Prostate gland (tissue), 2 donors: ENCODE measurements at regions of chr5 and their contacts with region 1.

Region 1: GRCh38 chr5:180090098-180090768 is 18.7 kb upstream of the RNF130 start:
- DNase-seq: peak; percentile 18
- H3K4me3 ChIP-seq: peak overlapping the region; percentile 29 to 41
- H3K27ac ChIP-seq: peak overlapping the region; percentile 56 to 59
- H3K4me1 ChIP-seq: peaks cover 2% of the 10 kb centered on the region
- H3K27me3 ChIP-seq: no peaks in the 10 kb centered on the region
- CTCF ChIP-seq: peak; percentile 67 to 77 (median 76)
- POLR2A ChIP-seq: no peak

Region 2: GRCh38 chr5:179187229-179187678 is 903.0 kb before region 1 on chr5:
- intact Hi-C with region 1: no loop called
- DNase-seq: no peak
- H3K4me3 ChIP-seq: no peak overlapping the region
- H3K27ac ChIP-seq: no peak overlapping the region
- H3K4me1 ChIP-seq: no peaks in the 10 kb centered on the region
- H3K27me3 ChIP-seq: no peaks in the 10 kb centered on the region
- CTCF ChIP-seq: no peak
- POLR2A ChIP-seq: no peak

Region 3: GRCh38 chr5:179986328-179986727 is 103.9 kb before region 1 on chr5:
- intact Hi-C with region 1: loop called (anchors 5 kb)
- DNase-seq: no peak
- H3K4me3 ChIP-seq: no peak overlapping the region
- H3K27ac ChIP-seq: no peak overlapping the region
- H3K4me1 ChIP-seq: no peaks in the 10 kb centered on the region
- H3K27me3 ChIP-seq: no peaks in the 10 kb centered on the region
- CTCF ChIP-seq: peak in 3 of 4 experiments; percentile 12 to 39 (median 24)
- POLR2A ChIP-seq: no peak

Region 4: DNA sequence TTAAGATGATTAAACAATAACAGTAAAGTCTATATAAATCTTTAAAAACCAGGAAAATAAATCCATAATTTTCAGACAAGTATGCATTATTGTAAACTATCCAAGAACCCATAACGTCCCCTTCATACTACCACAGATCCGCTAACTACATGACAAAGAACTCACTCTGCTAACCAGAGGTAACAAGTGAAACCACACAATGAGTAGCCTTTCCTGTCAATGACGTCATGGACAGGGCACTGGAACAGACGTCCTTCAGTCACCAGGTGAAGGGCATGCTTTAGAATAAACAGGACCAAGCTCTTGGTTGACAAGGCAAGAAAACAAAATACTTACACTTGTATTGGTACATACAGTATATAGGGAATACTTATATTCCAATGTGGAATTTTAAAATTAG is 63.9 kb before region 1 on chr5:
- intact Hi-C with region 1: no loop called
- DNase-seq: no peak
- H3K4me3 ChIP-seq: no peak overlapping the region
- H3K27ac ChIP-seq: no peak overlapping the region
- H3K4me1 ChIP-seq: no peaks in the 10 kb centered on the region
- H3K27me3 ChIP-seq: no peaks in the 10 kb centered on the region
- CTCF ChIP-seq: no peak
- POLR2A ChIP-seq: no peak

Region 5: GRCh38 chr5:180136630-180137381 is 46.6 kb after region 1 on chr5:
- intact Hi-C with region 1: no loop called
- DNase-seq: no peak
- H3K4me3 ChIP-seq: no peak overlapping the region
- H3K27ac ChIP-seq: no peak overlapping the region
- H3K4me1 ChIP-seq: no peaks in the 10 kb centered on the region
- H3K27me3 ChIP-seq: peaks cover 8% of the 10 kb centered on the region
- CTCF ChIP-seq: no peak
- POLR2A ChIP-seq: no peak

Region 6: DNA sequence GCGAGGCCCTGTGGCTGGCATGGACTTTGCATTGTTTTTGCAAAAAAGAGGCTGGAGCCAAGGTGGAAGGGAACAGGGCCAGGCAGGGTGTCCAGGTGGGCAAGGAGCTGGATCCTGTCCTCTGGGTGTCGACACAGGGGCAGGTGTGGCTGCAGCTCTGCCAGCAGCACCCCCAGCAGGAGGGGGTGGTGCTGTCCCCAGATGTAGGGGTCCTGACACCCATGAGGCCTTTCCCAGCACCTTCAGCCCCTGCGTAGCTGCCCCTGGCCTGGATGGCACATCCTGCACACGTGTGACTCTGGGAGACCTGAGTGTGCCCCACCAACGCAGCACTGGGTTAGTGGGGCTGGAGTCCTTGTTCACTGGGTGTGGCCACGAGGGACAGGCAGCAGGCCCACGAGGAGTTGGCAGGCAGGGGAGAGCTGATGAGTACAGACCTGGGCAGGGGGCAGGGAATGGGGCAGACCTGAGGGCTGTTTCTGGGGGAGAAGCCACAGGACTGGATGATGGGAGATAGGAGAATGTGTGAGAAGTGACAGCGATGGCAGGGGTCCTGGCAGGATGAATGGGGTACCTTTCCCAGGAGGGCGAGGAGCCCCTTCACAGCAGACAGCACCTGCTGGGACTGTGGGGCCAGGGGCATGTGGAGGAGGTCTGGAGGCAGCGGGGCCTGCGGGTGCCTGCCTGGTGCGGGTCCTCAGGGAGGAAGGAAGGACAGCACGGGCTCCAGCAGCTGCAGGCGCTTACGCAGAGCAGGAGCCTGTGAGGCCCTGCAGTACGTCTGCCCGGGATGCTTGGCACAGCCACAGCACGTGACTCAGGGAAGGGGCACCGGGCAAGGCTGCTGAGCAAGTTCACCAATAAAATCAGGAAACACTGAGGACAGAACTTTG is 122.4 kb after region 1 on chr5:
- intact Hi-C with region 1: no loop called
- DNase-seq: peak; percentile 35
- H3K4me3 ChIP-seq: no peak overlapping the region
- H3K27ac ChIP-seq: no peak overlapping the region
- H3K4me1 ChIP-seq: no peaks in the 10 kb centered on the region
- H3K27me3 ChIP-seq: no peaks in the 10 kb centered on the region
- CTCF ChIP-seq: no peak
- POLR2A ChIP-seq: no peak